Dorsolateral prefrontal cortex (tissue), 120 donors: ENCODE measurements at regions of chr10 and their contacts with region 1.

Region 1: DNA sequence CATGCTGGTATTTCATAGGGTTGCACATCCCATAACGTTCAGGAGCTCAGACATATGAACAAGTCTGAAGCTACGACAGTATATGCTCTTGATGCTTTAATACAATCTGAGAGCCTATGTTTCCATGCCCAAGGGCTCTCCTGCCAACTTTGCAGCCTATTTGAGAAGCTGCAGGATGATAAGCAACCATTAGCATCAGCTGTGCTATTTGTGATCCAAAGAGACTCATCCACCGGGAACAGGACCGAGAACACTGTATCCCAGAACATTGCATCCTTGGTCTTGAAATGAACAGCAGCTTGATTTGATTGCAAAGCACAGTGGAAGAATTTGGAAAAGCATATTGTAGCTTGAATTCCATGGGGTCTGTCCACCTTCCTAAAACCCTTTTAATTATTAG is 156.2 kb upstream of the PTER start:
- DNase-seq: peak in 7 of 10 donors; percentile 14 to 79 (median 52)
- H3K4me3 ChIP-seq: no peak overlapping the region
- H3K27ac ChIP-seq: peak overlapping the region in 44 of 59 donors; percentile 1 to 86 (median 57)
- H3K27me3 ChIP-seq: no peaks in the 10 kb centered on the region
- CTCF ChIP-seq: no peak

Region 2: GRCh38 chr10:16258291-16259040 is 22.1 kb before region 1 on chr10:
- intact Hi-C with region 1: loop called in 1 of 2 experiments (anchors 1 kb)
- DNase-seq: peak in 3 of 10 donors; percentile 34 to 56 (median 40)
- H3K4me3 ChIP-seq: no peak overlapping the region
- H3K27ac ChIP-seq: peak overlapping the region in 36 of 59 donors; percentile 3 to 77 (median 48)
- H3K27me3 ChIP-seq: no peaks in the 10 kb centered on the region
- CTCF ChIP-seq: no peak